Activated CD4-positive, alpha-beta T cell treated with anti-CD3 and anti-CD28 coated beads for 36 hours (primary cell): ENCODE measurements at regions of chr16 and their contacts with region 1.

Region 1: GRCh38 chr16:54286090-54286993 is at the start of gene IRX3:
- DNase-seq: peak; percentile 38
- ATAC-seq: peak; percentile 27
- H3K4me3 Mint-ChIP-seq: peak within 1 kb of the TSS; percentile 62
- H3K27ac Mint-ChIP-seq: no peak within 1 kb of the TSS
- H3K4me1 Mint-ChIP-seq: peaks cover 35% of the 10 kb centered on the region
- H3K27me3 Mint-ChIP-seq: peaks cover 54% of the 10 kb centered on the region
- total RNA-seq, gene IRX3: not detected

Region 2: DNA sequence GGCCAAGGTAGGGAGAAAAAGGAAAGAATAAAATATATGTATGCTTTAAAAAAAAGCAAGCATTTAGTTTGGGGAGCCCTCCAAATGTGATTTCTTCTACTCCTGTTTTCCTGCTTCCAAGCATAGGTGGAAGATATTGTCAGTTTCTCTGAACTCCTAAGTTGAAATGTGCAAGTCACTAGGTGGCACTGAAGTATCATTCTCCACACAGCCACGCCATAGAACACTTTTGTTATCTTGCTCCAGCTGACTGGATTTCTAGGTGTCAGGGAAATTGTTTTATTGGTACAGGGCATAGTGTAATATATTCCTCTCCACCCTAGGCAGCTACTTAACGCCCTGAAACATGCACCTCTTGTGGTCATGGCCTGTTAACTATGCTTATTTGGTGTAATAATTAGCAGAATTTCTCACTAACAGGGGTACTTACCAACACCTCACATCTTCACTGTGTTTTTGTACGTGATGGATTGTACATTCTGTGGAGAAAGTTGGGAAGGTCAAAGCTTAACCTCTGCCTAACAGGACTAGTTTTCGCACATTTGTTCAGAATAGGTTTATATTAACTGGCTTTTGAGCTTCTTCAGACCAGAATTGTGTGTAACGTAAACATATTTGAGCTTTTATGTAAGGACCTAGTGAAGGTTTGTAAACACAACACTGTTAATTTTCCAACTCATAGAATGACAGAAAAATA is 513.0 kb before region 1 on chr16:
- CTCF ChIA-PET with region 1: no interaction called
- POLR2A ChIA-PET with region 1: no interaction called
- intact Hi-C with region 1: loop called in 1 of 2 experiments (anchors 2 kb)
- DNase-seq: no peak
- ATAC-seq: no peak
- H3K4me3 Mint-ChIP-seq: no peak overlapping the region
- H3K27ac Mint-ChIP-seq: no peak overlapping the region
- H3K4me1 Mint-ChIP-seq: peaks cover 30% of the 10 kb centered on the region
- H3K27me3 Mint-ChIP-seq: no peaks in the 10 kb centered on the region

Region 3: GRCh38 chr16:53945996-53946395 is 340.3 kb before region 1 on chr16:
- CTCF ChIA-PET with region 1: interaction called, 3 read pairs
- POLR2A ChIA-PET with region 1: no interaction called
- intact Hi-C with region 1: loop called in 1 of 2 experiments (anchors 2 kb)
- DNase-seq: no peak
- ATAC-seq: no peak
- H3K4me3 Mint-ChIP-seq: no peak overlapping the region
- H3K27ac Mint-ChIP-seq: no peak overlapping the region
- H3K4me1 Mint-ChIP-seq: peaks cover under 1% of the 10 kb centered on the region
- H3K27me3 Mint-ChIP-seq: no peaks in the 10 kb centered on the region

Region 4: DNA sequence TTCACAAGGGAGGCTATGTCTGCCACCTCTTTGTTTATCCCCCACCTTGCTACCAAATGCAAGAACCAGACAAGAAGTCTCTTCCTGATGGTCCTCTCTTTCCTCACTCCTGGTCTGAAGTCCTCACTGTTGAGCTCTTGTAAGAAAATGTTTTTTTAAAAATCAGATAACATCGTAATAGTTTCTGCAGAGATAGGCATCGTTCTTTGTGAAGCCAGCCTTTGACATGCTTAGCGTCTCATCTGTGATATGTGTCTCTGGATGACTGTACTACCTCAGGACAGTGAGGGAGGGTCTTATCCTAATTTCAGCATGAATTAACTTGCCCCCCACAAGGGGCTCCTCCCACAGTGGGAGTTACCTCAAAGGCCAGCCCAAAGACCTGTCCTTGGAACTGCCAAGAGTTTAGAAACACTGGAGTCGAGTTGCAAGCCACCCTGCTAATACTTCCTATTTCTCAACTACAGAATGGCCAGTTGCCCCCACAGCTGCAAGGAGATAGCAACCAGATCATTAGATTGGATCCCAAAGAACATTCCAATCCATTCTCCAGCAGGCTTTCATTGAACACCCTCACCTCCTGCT is 150.9 kb before region 1 on chr16:
- CTCF ChIA-PET with region 1: no interaction called
- POLR2A ChIA-PET with region 1: no interaction called
- intact Hi-C with region 1: no loop called
- DNase-seq: no peak
- ATAC-seq: no peak
- H3K4me3 Mint-ChIP-seq: no peak overlapping the region
- H3K27ac Mint-ChIP-seq: no peak overlapping the region
- H3K4me1 Mint-ChIP-seq: no peaks in the 10 kb centered on the region
- H3K27me3 Mint-ChIP-seq: no peaks in the 10 kb centered on the region

Region 5: GRCh38 chr16:54242199-54242598 is 44.1 kb before region 1 on chr16:
- CTCF ChIA-PET with region 1: no interaction called
- POLR2A ChIA-PET with region 1: no interaction called
- intact Hi-C with region 1: no loop called
- DNase-seq: peak; percentile 8
- ATAC-seq: no peak
- H3K4me3 Mint-ChIP-seq: no peak overlapping the region
- H3K27ac Mint-ChIP-seq: no peak overlapping the region
- H3K4me1 Mint-ChIP-seq: no peaks in the 10 kb centered on the region
- H3K27me3 Mint-ChIP-seq: peaks cover 7% of the 10 kb centered on the region

Region 6: GRCh38 chr16:54326266-54326662 is 39.9 kb after region 1 on chr16:
- CTCF ChIA-PET with region 1: no interaction called
- POLR2A ChIA-PET with region 1: no interaction called
- intact Hi-C with region 1: no loop called
- DNase-seq: no peak
- ATAC-seq: no peak
- H3K4me3 Mint-ChIP-seq: no peak overlapping the region
- H3K27ac Mint-ChIP-seq: no peak overlapping the region
- H3K4me1 Mint-ChIP-seq: no peaks in the 10 kb centered on the region
- H3K27me3 Mint-ChIP-seq: peaks cover 3% of the 10 kb centered on the region

Region 7: DNA sequence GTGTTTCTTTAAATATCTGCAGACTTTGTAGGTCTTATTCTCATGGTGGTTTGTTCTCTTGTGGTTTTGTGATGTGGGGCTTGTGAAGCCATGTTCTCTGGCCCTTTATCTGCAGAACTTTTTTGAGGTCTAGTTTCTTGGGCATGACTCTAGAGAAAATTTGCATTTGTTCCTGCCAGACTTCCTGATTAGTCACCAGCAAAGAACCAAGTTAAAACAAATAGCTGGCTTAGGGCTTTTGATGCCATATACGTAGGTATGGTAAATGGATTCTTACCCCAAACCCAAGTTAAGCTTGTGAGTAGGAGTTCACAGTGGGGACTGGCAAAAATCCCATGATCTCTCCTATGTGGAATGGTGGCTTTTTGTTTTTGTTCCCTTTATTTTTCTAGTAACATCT is 68.9 kb after region 1 on chr16:
- CTCF ChIA-PET with region 1: no interaction called
- POLR2A ChIA-PET with region 1: no interaction called
- intact Hi-C with region 1: no loop called
- DNase-seq: no peak
- ATAC-seq: no peak
- H3K4me3 Mint-ChIP-seq: no peak overlapping the region
- H3K27ac Mint-ChIP-seq: no peak overlapping the region
- H3K4me1 Mint-ChIP-seq: no peaks in the 10 kb centered on the region
- H3K27me3 Mint-ChIP-seq: peaks cover 16% of the 10 kb centered on the region

Region 8: DNA sequence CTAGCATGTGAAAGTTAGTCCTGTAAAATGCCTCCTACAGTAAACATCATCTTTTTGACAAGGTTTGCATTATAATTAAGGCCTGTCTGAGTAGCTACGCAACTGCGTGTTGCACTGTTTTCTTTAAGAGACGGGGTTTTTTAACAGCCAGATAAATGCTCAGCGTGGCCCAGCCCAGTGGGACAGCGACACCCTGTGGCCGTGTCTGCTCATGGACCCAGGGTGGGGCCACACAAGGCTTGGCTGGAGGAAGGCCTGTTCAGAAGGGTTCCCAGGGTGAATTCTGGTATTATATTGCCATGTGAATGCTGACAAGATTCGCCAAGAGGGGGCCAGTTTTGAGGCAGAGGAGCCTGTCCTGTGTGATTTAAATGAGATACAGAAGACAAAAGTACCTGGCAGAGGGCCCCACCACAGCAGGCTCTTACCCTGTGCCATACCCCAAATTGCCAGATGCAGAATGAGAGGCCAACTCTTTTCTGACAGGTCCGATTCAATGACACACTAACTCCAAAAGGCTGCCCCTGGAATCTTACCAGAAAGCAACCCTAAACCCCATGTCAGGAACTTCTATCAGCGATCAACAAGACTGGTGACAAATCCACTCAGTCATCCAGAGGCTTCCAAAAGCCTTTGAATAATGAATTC is 971.7 kb after region 1 on chr16:
- CTCF ChIA-PET with region 1: no interaction called
- POLR2A ChIA-PET with region 1: no interaction called
- intact Hi-C with region 1: loop called in 1 of 2 experiments (anchors 2 kb)
- DNase-seq: peak; percentile 79
- ATAC-seq: peak; percentile 63
- H3K4me3 Mint-ChIP-seq: no peak overlapping the region
- H3K27ac Mint-ChIP-seq: no peak overlapping the region
- H3K4me1 Mint-ChIP-seq: peaks cover 2% of the 10 kb centered on the region
- H3K27me3 Mint-ChIP-seq: peaks cover 6% of the 10 kb centered on the region